CD8-positive, alpha-beta T cell (primary cell): ENCODE measurements at regions of chr5 and their contacts with region 1.

Region 1: GRCh38 chr5:67165526-67166459 is 30.8 kb downstream of the CD180 start:
- DNase-seq: peak; percentile 65 to 89 (median 82)
- ATAC-seq: peak; percentile 78
- H3K4me3 ChIP-seq: peak overlapping the region; percentile 52 to 54
- H3K4me3 Mint-ChIP-seq: peak overlapping the region; percentile 84
- H3K27ac ChIP-seq: peak overlapping the region; percentile 65 to 85
- H3K27ac Mint-ChIP-seq: peak overlapping the region; percentile 97
- H3K4me1 ChIP-seq: peaks cover 65% of the 10 kb centered on the region
- H3K4me1 Mint-ChIP-seq: peaks cover 68% of the 10 kb centered on the region
- H3K27me3 ChIP-seq: no peaks in the 10 kb centered on the region
- H3K27me3 Mint-ChIP-seq: no peaks in the 10 kb centered on the region
- CTCF ChIP-seq: peak; percentile 73

Region 2: GRCh38 chr5:67003935-67004729 is 161.7 kb before region 1 on chr5:
- CTCF ChIA-PET with region 1: interaction called, 3 read pairs
- POLR2A ChIA-PET with region 1: no interaction called
- intact Hi-C with region 1: loop called (anchors 5 kb)
- DNase-seq: peak; percentile 70 to 93 (median 87)
- ATAC-seq: peak; percentile 78
- H3K4me3 ChIP-seq: peak overlapping the region; percentile 75 to 85
- H3K4me3 Mint-ChIP-seq: peak overlapping the region; percentile 95
- H3K27ac ChIP-seq: peak overlapping the region; percentile 59 to 75
- H3K27ac Mint-ChIP-seq: peak overlapping the region; percentile 98
- H3K4me1 ChIP-seq: peaks cover 36% of the 10 kb centered on the region
- H3K4me1 Mint-ChIP-seq: peaks cover 52% of the 10 kb centered on the region
- H3K27me3 ChIP-seq: no peaks in the 10 kb centered on the region
- H3K27me3 Mint-ChIP-seq: no peaks in the 10 kb centered on the region
- CTCF ChIP-seq: no peak

Region 3: DNA sequence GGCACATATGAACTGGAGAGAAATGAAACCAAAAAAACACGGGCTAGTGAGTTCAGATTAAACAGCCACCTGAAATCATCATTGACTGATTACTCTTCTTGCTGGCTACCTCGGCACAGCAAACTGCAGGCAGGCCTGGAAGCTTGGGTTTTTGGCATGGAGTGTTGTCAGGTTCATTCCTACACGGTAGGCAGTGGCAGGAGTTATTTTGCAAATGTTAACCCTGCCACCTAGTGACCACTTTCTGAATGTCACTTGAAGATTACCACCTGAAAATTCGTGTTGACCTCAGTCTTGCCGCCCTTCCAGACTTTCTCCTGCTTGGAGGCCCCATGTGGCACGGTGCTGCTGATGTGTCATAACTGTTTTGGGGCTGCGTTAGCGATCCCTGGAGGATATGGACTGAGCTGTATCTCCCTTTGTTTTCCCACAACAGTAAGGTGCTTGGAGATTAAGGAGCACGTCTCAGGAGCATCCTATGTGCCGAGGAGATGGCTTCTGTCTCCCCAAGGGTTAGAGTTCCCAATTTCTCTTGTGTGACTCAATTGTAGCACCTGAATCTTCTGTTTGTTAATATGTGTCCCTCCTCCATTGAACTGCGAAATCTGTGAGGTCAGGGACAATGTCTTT is 43.5 kb after region 1 on chr5:
- CTCF ChIA-PET with region 1: interaction called, 537 read pairs
- POLR2A ChIA-PET with region 1: interaction called, 42 read pairs
- intact Hi-C with region 1: loop called (anchors 1 to 2 kb)
- DNase-seq: peak; percentile 12 to 84 (median 61)
- ATAC-seq: peak; percentile 51
- H3K4me3 ChIP-seq: no peak overlapping the region
- H3K4me3 Mint-ChIP-seq: peak overlapping the region; percentile 13
- H3K27ac ChIP-seq: no peak overlapping the region
- H3K27ac Mint-ChIP-seq: peak overlapping the region; percentile 86
- H3K4me1 ChIP-seq: peaks cover 49% of the 10 kb centered on the region
- H3K4me1 Mint-ChIP-seq: peaks cover 58% of the 10 kb centered on the region
- H3K27me3 ChIP-seq: no peaks in the 10 kb centered on the region
- H3K27me3 Mint-ChIP-seq: no peaks in the 10 kb centered on the region
- CTCF ChIP-seq: peak; percentile 81

Region 4: GRCh38 chr5:67215583-67216471 is 50.0 kb after region 1 on chr5:
- CTCF ChIA-PET with region 1: interaction called, 537 read pairs
- POLR2A ChIA-PET with region 1: interaction called, 18 read pairs
- intact Hi-C with region 1: no loop called
- DNase-seq: peak; percentile 51 to 88 (median 74)
- ATAC-seq: peak; percentile 97
- H3K4me3 ChIP-seq: peak overlapping the region; percentile 19 to 39
- H3K4me3 Mint-ChIP-seq: peak overlapping the region; percentile 72
- H3K27ac ChIP-seq: peak overlapping the region; percentile 60 to 61
- H3K27ac Mint-ChIP-seq: peak overlapping the region; percentile 99
- H3K4me1 ChIP-seq: peaks cover 45% of the 10 kb centered on the region
- H3K4me1 Mint-ChIP-seq: peaks cover 60% of the 10 kb centered on the region
- H3K27me3 ChIP-seq: no peaks in the 10 kb centered on the region
- H3K27me3 Mint-ChIP-seq: no peaks in the 10 kb centered on the region
- CTCF ChIP-seq: no peak

Region 5: DNA sequence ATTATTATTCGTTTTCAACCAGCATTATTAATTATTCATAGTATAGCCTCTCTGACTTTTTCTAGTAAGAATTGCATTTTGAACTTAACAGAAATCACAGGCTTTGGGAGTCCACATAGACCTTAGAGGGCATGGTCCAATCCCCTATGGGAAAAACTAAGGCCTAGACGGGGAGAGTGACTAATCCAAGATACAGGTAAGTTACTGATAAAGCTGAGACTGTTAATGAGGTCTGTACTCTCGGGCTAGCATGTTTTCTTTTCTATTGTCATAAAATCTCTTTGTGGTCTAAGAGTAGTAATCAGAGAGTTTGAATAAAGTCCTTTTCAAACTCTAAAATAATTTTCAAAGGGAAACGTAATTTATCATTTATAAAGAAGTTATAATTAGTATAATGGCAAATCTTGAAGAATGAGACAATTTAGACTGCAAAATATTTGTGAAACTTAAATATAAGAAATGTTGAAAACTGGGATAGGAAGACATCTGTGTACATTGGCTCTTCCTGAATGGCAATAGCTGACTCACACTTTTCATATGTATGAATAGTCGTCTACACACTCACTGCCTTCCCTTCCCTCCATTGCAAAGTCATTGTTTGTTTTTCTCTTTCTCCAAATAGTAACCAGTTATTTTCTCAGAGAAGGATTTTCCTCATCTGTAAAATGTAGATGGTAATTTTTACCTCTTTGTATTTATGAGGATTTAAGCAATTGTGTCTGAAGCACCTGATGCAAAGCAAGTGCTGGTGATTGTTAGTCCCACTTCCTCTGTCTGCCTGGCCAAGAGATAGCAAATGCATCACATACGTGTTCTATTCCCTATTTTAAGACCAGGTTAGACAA is 238.7 kb after region 1 on chr5:
- CTCF ChIA-PET with region 1: no interaction called
- POLR2A ChIA-PET with region 1: no interaction called
- intact Hi-C with region 1: no loop called
- DNase-seq: no peak
- ATAC-seq: no peak
- H3K4me3 ChIP-seq: no peak overlapping the region
- H3K4me3 Mint-ChIP-seq: no peak overlapping the region
- H3K27ac ChIP-seq: no peak overlapping the region
- H3K27ac Mint-ChIP-seq: no peak overlapping the region
- H3K4me1 ChIP-seq: no peaks in the 10 kb centered on the region
- H3K4me1 Mint-ChIP-seq: no peaks in the 10 kb centered on the region
- H3K27me3 ChIP-seq: no peaks in the 10 kb centered on the region
- H3K27me3 Mint-ChIP-seq: peaks cover 3% of the 10 kb centered on the region
- CTCF ChIP-seq: no peak

Region 6: DNA sequence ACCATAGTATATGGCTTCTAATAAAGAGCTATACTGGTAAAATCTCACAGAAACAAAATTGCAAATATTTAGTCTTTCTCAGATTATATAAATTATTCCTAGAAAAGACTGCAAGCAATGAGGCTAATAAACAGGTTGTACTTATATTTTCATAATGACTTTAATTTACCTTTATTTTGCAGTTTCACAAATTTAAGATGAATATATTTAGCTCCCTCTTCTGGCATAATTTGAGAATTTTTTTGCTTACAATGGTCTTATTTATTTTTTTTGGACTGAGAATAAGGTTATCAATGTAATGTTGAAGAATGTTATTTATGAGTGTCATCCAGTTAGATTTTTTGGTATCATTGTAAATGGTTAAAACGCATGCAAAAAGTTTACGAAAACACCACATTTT is 1106.5 kb after region 1 on chr5:
- CTCF ChIA-PET with region 1: interaction called, 3 read pairs
- POLR2A ChIA-PET with region 1: no interaction called
- intact Hi-C with region 1: loop called in 1 of 2 experiments (anchors 10 kb)
- DNase-seq: peak in 2 of 9 experiments; percentile 38 to 58
- ATAC-seq: no peak
- H3K4me3 ChIP-seq: no peak overlapping the region
- H3K4me3 Mint-ChIP-seq: no peak overlapping the region
- H3K27ac ChIP-seq: no peak overlapping the region
- H3K27ac Mint-ChIP-seq: peak overlapping the region; percentile 52
- H3K4me1 ChIP-seq: peaks cover 64% of the 10 kb centered on the region
- H3K4me1 Mint-ChIP-seq: peaks cover 76% of the 10 kb centered on the region
- H3K27me3 ChIP-seq: no peaks in the 10 kb centered on the region
- H3K27me3 Mint-ChIP-seq: no peaks in the 10 kb centered on the region
- CTCF ChIP-seq: peak; percentile 66